ENCODE measurements at regions of chr12 and their contacts with region 1.

Region 1: GRCh38 chr12:9673404-9674225 is 4.1 kb downstream of the CLEC2D start:
- DNase-seq: peak; percentile 86
- H3K4me3 Mint-ChIP-seq: peak overlapping the region; percentile 89
- H3K27ac Mint-ChIP-seq: peak overlapping the region; percentile 97
- H3K4me1 Mint-ChIP-seq: peaks cover 58% of the 10 kb centered on the region
- H3K27me3 Mint-ChIP-seq: no peaks in the 10 kb centered on the region

Region 2: GRCh38 chr12:9634177-9634803 is 39.3 kb before region 1 on chr12:
- intact Hi-C with region 1: loop called (anchors 1 kb)
- DNase-seq: peak; percentile 94
- H3K4me3 Mint-ChIP-seq: peak overlapping the region; percentile 64
- H3K27ac Mint-ChIP-seq: peak overlapping the region; percentile 57
- H3K4me1 Mint-ChIP-seq: peaks cover 50% of the 10 kb centered on the region
- H3K27me3 Mint-ChIP-seq: peaks cover 4% of the 10 kb centered on the region

Region 3: DNA sequence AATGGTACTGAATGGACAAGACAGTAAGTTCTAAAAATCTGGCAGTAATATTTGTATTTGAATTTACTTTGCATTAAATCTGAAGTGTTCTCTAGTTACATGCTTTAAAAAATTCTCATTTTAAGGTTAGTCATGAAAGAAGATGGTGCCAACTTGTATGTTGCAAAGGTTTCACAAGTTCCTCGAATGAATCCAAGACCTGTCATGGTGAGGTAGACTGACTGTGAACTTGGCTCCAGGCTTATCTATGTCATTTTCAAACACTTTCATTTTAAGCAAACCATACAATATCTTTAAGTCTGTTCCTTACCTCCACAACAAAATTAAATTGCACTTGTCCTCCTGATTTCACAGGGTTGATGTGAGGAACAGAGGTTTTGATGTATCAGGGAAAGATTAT is 19.3 kb after region 1 on chr12:
- intact Hi-C with region 1: loop called (anchors 2 kb)
- DNase-seq: no peak
- H3K4me3 Mint-ChIP-seq: no peak overlapping the region
- H3K27ac Mint-ChIP-seq: no peak overlapping the region
- H3K4me1 Mint-ChIP-seq: peaks cover 46% of the 10 kb centered on the region
- H3K27me3 Mint-ChIP-seq: no peaks in the 10 kb centered on the region

Region 4: GRCh38 chr12:9702255-9702654 is 28.6 kb after region 1 on chr12:
- intact Hi-C with region 1: loop called (anchors 2 kb)
- DNase-seq: peak; percentile 87
- H3K4me3 Mint-ChIP-seq: peak overlapping the region; percentile 68
- H3K27ac Mint-ChIP-seq: peak overlapping the region; percentile 83
- H3K4me1 Mint-ChIP-seq: peaks cover 69% of the 10 kb centered on the region
- H3K27me3 Mint-ChIP-seq: no peaks in the 10 kb centered on the region

Region 5: DNA sequence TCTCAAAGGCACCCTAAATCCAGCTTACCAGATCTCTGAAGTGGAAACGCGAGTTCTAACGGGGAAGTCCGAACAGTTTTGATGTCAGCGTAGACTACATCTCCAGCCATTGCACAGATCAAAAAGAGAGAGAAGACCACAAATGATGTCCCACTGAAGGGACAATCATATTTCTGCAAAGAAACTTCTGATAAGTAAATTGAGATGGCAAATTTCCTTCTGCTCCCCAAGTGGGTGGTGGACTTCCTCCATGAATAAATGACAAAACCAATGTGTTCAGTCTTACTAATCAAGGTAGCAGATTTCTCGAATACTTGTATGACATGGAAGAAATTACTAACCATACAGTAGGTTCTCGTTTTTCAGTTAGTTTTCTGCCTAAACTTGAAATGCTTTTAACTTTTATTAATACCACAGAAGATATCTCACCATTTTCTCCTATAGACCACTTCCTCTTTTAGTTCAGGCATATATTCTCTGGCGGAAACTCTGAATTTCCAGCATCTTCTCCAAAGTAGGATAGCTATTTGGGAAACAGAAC is 59.4 kb after region 1 on chr12 and contains the start of gene CLECL1:
- intact Hi-C with region 1: loop called (anchors 1 kb)
- DNase-seq: no peak
- H3K4me3 Mint-ChIP-seq: peak within 1 kb of the TSS; percentile 85
- H3K27ac Mint-ChIP-seq: peak within 1 kb of the TSS; percentile 86
- H3K4me1 Mint-ChIP-seq: peaks cover 52% of the 10 kb centered on the region
- H3K27me3 Mint-ChIP-seq: no peaks in the 10 kb centered on the region
- total RNA-seq, gene CLECL1: 5.3 and 9.1 TPM in 2 replicates

Region 6: GRCh38 chr12:9760699-9761418 is 87.2 kb after region 1 on chr12 and contains the start of gene CD69:
- intact Hi-C with region 1: loop called (anchors 1 kb)
- DNase-seq: peak; percentile 96
- H3K4me3 Mint-ChIP-seq: peak within 1 kb of the TSS; percentile 94
- H3K27ac Mint-ChIP-seq: peak within 1 kb of the TSS; percentile 98
- H3K4me1 Mint-ChIP-seq: peaks cover 48% of the 10 kb centered on the region
- H3K27me3 Mint-ChIP-seq: peaks cover 5% of the 10 kb centered on the region
- total RNA-seq, gene CD69: 106 and 111 TPM in 2 replicates

Region 7: DNA sequence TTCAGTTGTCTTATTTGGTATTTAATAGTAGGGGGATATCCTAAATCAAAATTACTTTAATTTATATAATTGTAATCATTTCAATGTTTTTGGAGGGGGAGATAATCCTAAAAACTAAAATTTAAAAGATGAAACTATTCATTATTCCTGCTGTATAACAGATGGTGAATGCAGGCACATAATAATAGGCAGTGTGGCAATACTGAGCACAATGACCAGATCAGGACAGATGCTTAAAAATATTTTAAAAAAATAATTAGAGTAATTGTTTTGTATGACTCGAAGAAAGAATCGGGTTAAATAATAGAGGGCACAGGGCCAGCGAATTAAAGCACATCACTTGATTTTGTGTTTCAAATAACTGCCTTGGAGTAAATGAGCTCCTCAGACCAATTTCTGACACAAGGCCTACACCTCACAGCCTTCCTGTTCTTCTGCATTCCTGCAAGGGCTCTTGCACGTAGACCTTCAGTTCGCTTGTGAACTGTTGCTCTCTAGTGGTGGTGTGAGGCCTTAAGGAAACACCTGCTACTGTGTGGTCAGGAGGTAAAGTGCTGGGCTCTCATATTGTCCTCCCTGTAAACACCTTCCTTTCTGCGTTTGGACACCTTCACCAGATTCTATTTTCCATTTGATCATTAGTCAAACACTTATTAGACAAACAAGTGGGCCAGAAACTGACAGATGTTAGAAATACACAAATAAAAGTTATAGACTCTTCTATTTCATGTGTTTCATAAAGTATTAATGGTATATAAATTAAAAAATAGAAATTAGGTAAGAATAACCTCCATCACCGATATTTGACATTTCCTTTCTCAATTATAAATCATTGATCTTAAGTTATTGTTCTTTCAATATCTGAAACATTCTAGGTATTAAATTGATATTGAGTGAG is 124.4 kb after region 1 on chr12:
- intact Hi-C with region 1: loop called (anchors 1 kb)
- DNase-seq: peak; percentile 92
- H3K4me3 Mint-ChIP-seq: peak overlapping the region; percentile 81
- H3K27ac Mint-ChIP-seq: peak overlapping the region; percentile 78
- H3K4me1 Mint-ChIP-seq: peaks cover 43% of the 10 kb centered on the region
- H3K27me3 Mint-ChIP-seq: peaks cover 8% of the 10 kb centered on the region

Region 8: GRCh38 chr12:9813821-9814809 is 140.5 kb after region 1 on chr12:
- intact Hi-C with region 1: no loop called
- DNase-seq: peak; percentile 98
- H3K4me3 Mint-ChIP-seq: peak overlapping the region; percentile 91
- H3K27ac Mint-ChIP-seq: peak overlapping the region; percentile 75
- H3K4me1 Mint-ChIP-seq: peaks cover 26% of the 10 kb centered on the region
- H3K27me3 Mint-ChIP-seq: peaks cover 24% of the 10 kb centered on the region